IMR-90 (cell line): ENCODE measurements at regions of chr22 and their contacts with region 1.

Region 1: DNA sequence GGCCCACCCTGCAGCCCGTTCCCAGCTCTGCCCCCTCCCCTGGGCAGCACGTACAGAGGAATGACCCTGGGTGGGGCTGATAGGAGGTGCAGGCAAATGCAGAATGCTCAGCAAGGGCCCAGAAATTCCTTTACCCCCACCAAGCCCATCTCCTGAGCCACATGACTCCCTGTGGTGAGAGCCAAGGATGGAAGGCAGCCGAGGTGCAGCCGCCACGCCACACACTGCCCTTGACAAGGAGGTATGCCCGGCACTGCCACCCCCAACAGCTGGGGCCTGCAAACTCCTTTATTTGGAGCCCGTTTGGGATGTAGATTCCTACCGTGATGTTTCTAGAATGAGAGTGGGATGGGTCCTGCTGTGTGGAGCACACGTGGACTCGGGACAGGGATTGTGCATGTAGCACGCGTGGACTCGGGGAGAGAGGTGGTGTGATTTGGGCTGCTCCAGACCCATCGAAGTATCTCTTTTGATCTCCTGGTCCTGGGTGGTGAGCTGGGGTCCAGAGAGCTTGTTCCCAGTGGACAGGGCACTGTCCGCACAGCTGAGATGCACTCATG is 12.9 kb downstream of the GTSE1 start:
- DNase-seq: no peak
- ATAC-seq: no peak
- H3K4me3 ChIP-seq: no peak overlapping the region
- H3K27ac ChIP-seq: no peak overlapping the region
- H3K4me1 ChIP-seq: no peaks in the 10 kb centered on the region
- H3K27me3 ChIP-seq: no peaks in the 10 kb centered on the region
- CTCF ChIP-seq: no peak
- POLR2A ChIP-seq: no peak
- RAD21 ChIP-seq: no peak

Region 2: GRCh38 chr22:45984316-45984916 is 325.2 kb before region 1 on chr22:
- CTCF ChIA-PET with region 1: no interaction called
- POLR2A ChIA-PET with region 1: no interaction called
- dilution Hi-C with region 1: no loop called
- in situ Hi-C with region 1: loop called (anchors 5 kb)
- intact Hi-C with region 1: no loop called
- DNase-seq: no peak
- ATAC-seq: no peak
- H3K4me3 ChIP-seq: no peak overlapping the region
- H3K27ac ChIP-seq: no peak overlapping the region
- H3K4me1 ChIP-seq: no peaks in the 10 kb centered on the region
- H3K27me3 ChIP-seq: peaks cover 31% of the 10 kb centered on the region
- CTCF ChIP-seq: no peak
- POLR2A ChIP-seq: no peak
- RAD21 ChIP-seq: no peak

Region 3: DNA sequence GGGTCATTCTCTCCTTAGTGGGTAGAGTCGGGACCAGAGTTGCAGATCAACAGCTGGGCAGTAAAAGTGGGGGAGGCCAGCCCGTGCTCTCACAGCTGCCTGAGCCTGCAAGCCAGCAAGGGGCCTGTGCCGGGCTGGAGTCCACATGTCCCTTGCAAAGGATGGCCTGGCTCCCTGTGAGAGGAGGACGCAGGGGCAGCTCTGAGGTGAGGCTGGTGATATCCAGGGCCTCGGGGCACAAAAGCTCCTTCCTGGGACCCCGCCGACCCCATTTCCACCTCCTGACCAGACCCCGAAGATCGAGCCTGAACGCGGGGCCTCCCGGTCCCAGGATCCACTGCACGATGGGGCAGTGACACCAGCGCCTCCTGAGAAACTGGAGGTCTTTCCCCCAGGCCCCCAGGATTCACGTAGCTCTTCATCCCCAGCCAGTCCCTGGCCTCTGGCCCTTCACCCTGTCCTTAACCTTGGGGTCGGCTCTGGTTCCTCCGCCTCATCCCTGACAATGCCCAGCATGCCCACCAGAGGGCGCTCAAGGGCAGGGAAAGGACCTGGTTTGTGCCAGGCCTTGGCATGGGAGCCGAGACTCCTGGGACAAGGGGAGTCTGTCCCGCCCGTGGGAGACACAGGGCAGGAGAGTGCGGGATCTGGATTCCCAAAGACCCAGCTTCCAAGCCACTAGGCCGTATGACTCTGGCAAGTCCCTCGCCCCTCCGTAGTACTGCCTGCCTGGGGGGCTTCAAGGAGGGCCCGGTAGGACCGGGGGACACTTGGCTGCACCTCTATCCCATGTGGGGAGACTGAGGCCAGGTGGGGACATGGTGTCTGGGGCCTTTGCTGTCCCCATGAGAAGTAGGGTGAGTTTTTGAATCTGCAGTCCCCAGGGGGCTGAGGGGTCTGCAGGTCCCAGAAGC is 314.9 kb before region 1 on chr22:
- CTCF ChIA-PET with region 1: no interaction called
- POLR2A ChIA-PET with region 1: no interaction called
- dilution Hi-C with region 1: no loop called
- in situ Hi-C with region 1: loop called (anchors 5 kb)
- intact Hi-C with region 1: loop called (anchors 1 kb)
- DNase-seq: peak; percentile 44
- ATAC-seq: peak; percentile 64
- H3K4me3 ChIP-seq: no peak overlapping the region
- H3K27ac ChIP-seq: no peak overlapping the region
- H3K4me1 ChIP-seq: peaks cover 28% of the 10 kb centered on the region
- H3K27me3 ChIP-seq: peaks cover 9% of the 10 kb centered on the region; the same call in 1 of the 2 replicates
- CTCF ChIP-seq: peak; percentile 96
- POLR2A ChIP-seq: peak; percentile 42; the same call in 1 of the 2 replicates
- RAD21 ChIP-seq: peak; percentile 96

Region 4: GRCh38 chr22:46491923-46492322 is 182.3 kb after region 1 on chr22:
- CTCF ChIA-PET with region 1: no interaction called
- POLR2A ChIA-PET with region 1: no interaction called
- dilution Hi-C with region 1: no loop called
- in situ Hi-C with region 1: no loop called
- intact Hi-C with region 1: no loop called
- DNase-seq: peak; percentile 19
- ATAC-seq: 0 out of 2 replicates have a peak, but pooled peaks have one; percentile 27
- H3K4me3 ChIP-seq: no peak overlapping the region
- H3K27ac ChIP-seq: no peak overlapping the region
- H3K4me1 ChIP-seq: no peaks in the 10 kb centered on the region
- H3K27me3 ChIP-seq: peaks cover 8% of the 10 kb centered on the region
- CTCF ChIP-seq: no peak
- POLR2A ChIP-seq: no peak
- RAD21 ChIP-seq: no peak